Activated CD4-positive, alpha-beta T cell treated with anti-CD3 and anti-CD28 coated beads for 36 hours (primary cell): ENCODE measurements at regions of chr15 and their contacts with region 1.

Region 1: DNA sequence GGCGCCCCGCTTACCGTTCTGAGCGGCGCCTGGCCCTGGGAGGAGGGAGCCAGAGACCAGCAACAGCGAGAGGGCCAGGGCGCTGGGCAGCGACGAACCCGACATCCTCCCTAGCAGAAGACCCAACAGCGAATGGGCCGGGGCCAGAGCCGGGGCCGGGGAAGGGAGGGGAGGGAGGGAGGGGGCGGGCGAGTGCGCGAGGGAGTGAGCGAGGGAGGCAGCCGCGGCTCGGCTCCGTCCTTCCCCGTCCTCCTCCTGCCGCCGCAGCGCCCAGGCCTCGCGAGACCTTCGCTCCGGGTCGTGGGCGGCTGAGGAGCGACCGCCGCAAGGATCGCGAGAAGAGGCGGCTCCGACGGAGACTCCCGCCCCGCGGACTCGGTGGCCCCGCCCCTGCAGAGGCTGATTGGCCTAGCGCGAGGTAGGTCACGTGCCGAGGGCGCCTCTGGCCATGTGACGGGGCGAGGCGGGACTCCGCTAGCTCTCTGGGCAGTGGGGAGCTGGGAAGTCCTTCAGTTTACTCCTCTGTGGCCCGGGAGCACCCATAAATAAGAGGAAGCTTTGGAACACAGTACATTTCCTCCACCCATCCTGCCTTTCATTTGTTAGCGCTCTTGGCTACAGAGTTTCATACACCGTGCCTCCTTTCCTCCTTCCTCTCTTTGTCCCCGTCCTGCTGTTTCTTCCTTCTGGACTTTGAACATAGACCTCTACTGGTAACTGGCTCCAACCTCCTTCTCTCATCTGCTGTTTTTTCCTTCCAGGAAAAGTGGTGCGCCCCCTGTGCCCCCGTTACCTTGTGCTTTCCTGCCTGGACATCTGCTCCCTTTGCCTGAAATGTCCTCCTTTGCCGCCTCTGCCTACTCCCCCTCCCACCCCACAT is at the start of gene NPTN:
- DNase-seq: peak; percentile 99
- ATAC-seq: peak; percentile 91
- H3K4me3 Mint-ChIP-seq: peak within 1 kb of the TSS; percentile 86
- H3K27ac Mint-ChIP-seq: peak within 1 kb of the TSS; percentile 71
- H3K4me1 Mint-ChIP-seq: peaks cover 52% of the 10 kb centered on the region
- H3K27me3 Mint-ChIP-seq: peaks cover 14% of the 10 kb centered on the region
- total RNA-seq, gene NPTN: 43.5 to 73.4 TPM

Region 2: GRCh38 chr15:73142802-73143762 is 490.3 kb before region 1 on chr15:
- CTCF ChIA-PET with region 1: no interaction called
- POLR2A ChIA-PET with region 1: no interaction called
- intact Hi-C with region 1: loop called in 1 of 2 experiments (anchors 10 kb)
- DNase-seq: peak; percentile 12
- ATAC-seq: peak; percentile 81
- H3K4me3 Mint-ChIP-seq: no peak overlapping the region
- H3K27ac Mint-ChIP-seq: peak overlapping the region; percentile 87
- H3K4me1 Mint-ChIP-seq: peaks cover 43% of the 10 kb centered on the region
- H3K27me3 Mint-ChIP-seq: no peaks in the 10 kb centered on the region

Region 3: DNA sequence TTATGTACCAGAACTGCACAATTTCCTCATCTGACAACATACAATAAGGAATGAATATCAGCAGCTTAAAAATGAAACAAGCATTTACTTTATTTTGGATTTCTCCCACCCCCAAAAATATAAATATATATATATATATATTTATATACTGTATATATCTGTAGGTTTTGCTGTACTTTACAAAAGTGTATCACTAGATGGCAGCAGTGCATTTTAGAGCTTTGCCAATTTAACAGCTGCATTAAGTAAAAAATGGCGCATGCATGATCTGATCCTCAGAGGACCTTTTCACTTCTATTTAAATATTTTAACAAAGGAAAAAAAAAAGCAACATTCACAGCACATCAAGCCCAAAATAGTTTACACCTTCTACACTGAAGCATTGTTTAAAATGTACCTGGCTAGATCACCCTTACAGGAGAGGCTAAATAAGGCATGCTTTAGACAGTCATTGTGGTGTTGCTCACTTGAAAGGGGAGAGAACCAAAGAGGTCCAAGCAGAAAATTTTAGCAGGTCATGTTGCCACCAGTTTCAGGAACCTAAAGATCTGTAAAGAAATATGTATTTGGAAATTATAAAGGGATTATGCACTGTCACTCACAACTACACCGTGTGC is 72.7 kb before region 1 on chr15:
- CTCF ChIA-PET with region 1: interaction called, 43 read pairs
- POLR2A ChIA-PET with region 1: no interaction called
- intact Hi-C with region 1: loop called (anchors 1 kb)
- DNase-seq: no peak
- ATAC-seq: peak; percentile 53
- H3K4me3 Mint-ChIP-seq: no peak overlapping the region
- H3K27ac Mint-ChIP-seq: no peak overlapping the region
- H3K4me1 Mint-ChIP-seq: no peaks in the 10 kb centered on the region
- H3K27me3 Mint-ChIP-seq: no peaks in the 10 kb centered on the region

Region 4: GRCh38 chr15:73650416-73651126 is 17.2 kb after region 1 on chr15:
- CTCF ChIA-PET with region 1: interaction called, 32 read pairs
- POLR2A ChIA-PET with region 1: interaction called, 10 read pairs
- intact Hi-C with region 1: loop called (anchors 1 to 2 kb)
- DNase-seq: peak; percentile 36
- ATAC-seq: peak; percentile 87
- H3K4me3 Mint-ChIP-seq: peak overlapping the region; percentile 10
- H3K27ac Mint-ChIP-seq: peak overlapping the region; percentile 69
- H3K4me1 Mint-ChIP-seq: peaks cover 18% of the 10 kb centered on the region
- H3K27me3 Mint-ChIP-seq: peaks cover 10% of the 10 kb centered on the region

Region 5: DNA sequence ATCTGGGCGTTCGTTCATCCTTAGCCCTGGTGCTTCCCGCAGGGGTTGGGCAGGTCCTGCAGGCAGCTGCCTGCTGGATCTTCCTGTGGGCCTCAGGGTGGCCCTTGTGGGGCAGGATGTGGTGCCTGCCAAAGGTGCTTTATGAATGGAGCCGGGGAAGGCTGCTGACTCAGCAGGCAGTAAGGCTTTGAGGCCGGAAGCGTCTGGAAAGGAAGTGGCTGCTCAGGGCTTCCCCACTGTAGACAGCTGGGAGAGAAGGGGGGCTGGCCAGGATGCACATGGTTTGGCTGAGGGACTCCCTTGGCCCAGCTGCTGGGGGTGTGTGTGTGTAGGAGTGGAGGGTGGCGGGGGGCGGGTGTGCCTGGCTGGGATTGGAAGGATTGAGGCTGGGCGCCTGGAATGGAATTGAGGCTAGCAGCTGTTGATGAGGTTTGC is 63.7 kb after region 1 on chr15:
- CTCF ChIA-PET with region 1: interaction called, 145 read pairs
- POLR2A ChIA-PET with region 1: interaction called, 4 read pairs
- intact Hi-C with region 1: loop called (anchors 1 kb)
- DNase-seq: peak; percentile 90
- ATAC-seq: peak; percentile 96
- H3K4me3 Mint-ChIP-seq: peak overlapping the region; percentile 39
- H3K27ac Mint-ChIP-seq: peak overlapping the region; percentile 56
- H3K4me1 Mint-ChIP-seq: peaks cover 25% of the 10 kb centered on the region
- H3K27me3 Mint-ChIP-seq: peaks cover 44% of the 10 kb centered on the region